Right ventricle myocardium inferior (tissue), 1 donor: ENCODE measurements at regions of chr17 and their contacts with region 1.

Region 1: GRCh38 chr17:2041561-2042366 is at the start of gene OVCA2:
- DNase-seq: peak; percentile 96
- ATAC-seq: peak; percentile 94
- total RNA-seq, gene OVCA2: 14.3 TPM

Region 2: GRCh38 chr17:1561400-1562175 is 480.2 kb before region 1 on chr17:
- intact Hi-C with region 1: loop called (anchors 10 kb)
- DNase-seq: peak; percentile 48
- ATAC-seq: no peak

Region 3: GRCh38 chr17:1661045-1661444 is 380.7 kb before region 1 on chr17:
- intact Hi-C with region 1: loop called (anchors 10 kb)
- DNase-seq: no peak
- ATAC-seq: peak; percentile 11

Region 4: GRCh38 chr17:1716076-1716995 is 325.4 kb before region 1 on chr17:
- intact Hi-C with region 1: loop called (anchors 5 kb)
- DNase-seq: peak; percentile 100
- ATAC-seq: peak; percentile 80